ENCODE measurements at regions of chr6 and their contacts with region 1.

Region 1: GRCh38 chr6:39302669-39303424 is 11.4 kb downstream of the KCNK17 start:
- DNase-seq: peak; percentile 62 to 93 (median 84)
- ATAC-seq: peak; percentile 99
- H3K4me3 ChIP-seq: no peak overlapping the region
- H3K27ac ChIP-seq: no peak overlapping the region
- H3K4me1 ChIP-seq: peaks cover 0 to 6% of the 10 kb centered on the region in 2 donors
- H3K27me3 ChIP-seq: no peaks in the 10 kb centered on the region
- CTCF ChIP-seq: peak; percentile 86 to 89

Region 2: GRCh38 chr6:38871741-38872568 is 430.9 kb before region 1 on chr6:
- intact Hi-C with region 1: loop called in 1 of 2 experiments (anchors 10 kb)
- DNase-seq: peak in 3 of 4 donors; percentile 37 to 52 (median 45)
- ATAC-seq: peak; percentile 87
- H3K4me3 ChIP-seq: no peak overlapping the region
- H3K27ac ChIP-seq: no peak overlapping the region
- H3K4me1 ChIP-seq: no peaks in the 10 kb centered on the region
- H3K27me3 ChIP-seq: no peaks in the 10 kb centered on the region
- CTCF ChIP-seq: peak; percentile 83 to 90

Region 3: DNA sequence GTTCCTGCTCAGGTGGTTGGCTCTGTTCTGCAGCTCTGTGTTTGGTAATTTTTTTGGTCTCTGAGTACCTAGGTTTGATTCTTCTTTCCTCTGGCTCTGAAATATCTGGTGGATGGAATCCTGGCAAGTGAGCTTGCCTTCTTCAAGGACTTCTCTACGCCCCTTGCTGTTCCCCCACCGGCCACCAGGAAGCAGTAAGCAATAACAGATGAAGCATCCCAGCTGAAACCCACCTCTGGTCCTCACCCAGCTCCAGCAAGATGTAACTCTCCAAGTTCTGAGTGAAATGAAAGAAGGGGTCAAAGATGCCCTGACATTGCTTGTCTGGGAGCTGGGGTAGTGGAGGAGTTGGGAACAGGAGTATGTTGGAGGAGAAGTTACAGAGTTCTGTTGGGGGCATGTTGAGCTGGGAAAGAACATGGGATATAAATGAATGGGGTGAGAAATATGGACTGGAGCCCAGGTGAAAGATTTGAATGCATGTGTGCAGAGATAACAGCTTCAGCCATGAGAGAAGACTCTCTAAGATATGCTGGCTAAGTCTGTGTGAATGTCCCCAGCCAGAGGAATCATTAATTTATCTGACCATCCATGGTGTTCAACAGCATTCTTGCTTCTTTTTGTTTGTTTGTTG is 305.6 kb before region 1 on chr6:
- intact Hi-C with region 1: loop called in 1 of 2 experiments (anchors 10 kb)
- DNase-seq: peak in 1 of 4 donors; percentile 46
- ATAC-seq: no peak
- H3K4me3 ChIP-seq: no peak overlapping the region
- H3K27ac ChIP-seq: no peak overlapping the region
- H3K4me1 ChIP-seq: no peaks in the 10 kb centered on the region
- H3K27me3 ChIP-seq: peaks cover 0 to 39% of the 10 kb centered on the region in 2 donors
- CTCF ChIP-seq: peak; percentile 38 to 50

Region 4: DNA sequence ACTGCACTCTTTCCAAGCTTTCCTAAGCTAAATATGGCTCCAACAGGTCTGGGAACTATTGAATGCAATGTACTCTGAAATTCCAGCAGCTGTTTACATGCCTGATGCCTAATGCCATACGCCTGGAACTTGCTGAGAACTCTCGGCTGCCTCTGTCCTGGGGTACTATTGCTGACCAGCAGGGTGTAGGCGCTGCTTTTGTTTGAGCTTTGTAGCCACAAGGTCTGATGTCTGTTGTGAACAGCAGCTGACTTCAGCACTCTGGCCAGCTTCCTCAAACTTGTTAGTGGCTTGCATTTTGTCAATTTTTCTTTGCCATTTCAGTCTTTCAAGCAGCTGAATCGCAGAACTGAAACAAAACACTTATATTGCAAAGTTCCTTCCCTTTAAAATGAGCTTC is 214.5 kb before region 1 on chr6:
- intact Hi-C with region 1: loop called in 1 of 2 experiments (anchors 10 kb)
- DNase-seq: peak in 3 of 4 donors; percentile 44 to 90 (median 80)
- ATAC-seq: peak; percentile 95
- H3K4me3 ChIP-seq: no peak overlapping the region
- H3K27ac ChIP-seq: no peak overlapping the region
- H3K4me1 ChIP-seq: no peaks in the 10 kb centered on the region
- H3K27me3 ChIP-seq: peaks cover 0 to 27% of the 10 kb centered on the region in 2 donors
- CTCF ChIP-seq: peak; percentile 29 to 47

Region 5: GRCh38 chr6:39166189-39166911 is 136.5 kb before region 1 on chr6:
- intact Hi-C with region 1: loop called (anchors 5 to 10 kb)
- DNase-seq: peak; percentile 59 to 97 (median 84)
- ATAC-seq: peak; percentile 95
- H3K4me3 ChIP-seq: no peak overlapping the region
- H3K27ac ChIP-seq: no peak overlapping the region
- H3K4me1 ChIP-seq: peaks cover 0 to 5% of the 10 kb centered on the region in 2 donors
- H3K27me3 ChIP-seq: no peaks in the 10 kb centered on the region
- CTCF ChIP-seq: peak; percentile 90 to 94